ENCODE measurements at regions of chr7 and their contacts with region 1.

Region 1: GRCh38 chr7:26078437-26079336 is 73.3 kb upstream of the NFE2L3 start:
- DNase-seq: peak; percentile 80 to 87 (median 85)
- H3K4me3 ChIP-seq: peak overlapping the region in 3 of 7 experiments; percentile 37 to 58 (median 48)
- H3K27ac ChIP-seq: no peak overlapping the region
- H3K4me1 ChIP-seq: peaks cover 0 to 8% (median 0%) of the 10 kb centered on the region in 4 experiments
- H3K27me3 ChIP-seq: peaks cover 0 to 3% (median 0%) of the 10 kb centered on the region in 5 experiments

Region 2: DNA sequence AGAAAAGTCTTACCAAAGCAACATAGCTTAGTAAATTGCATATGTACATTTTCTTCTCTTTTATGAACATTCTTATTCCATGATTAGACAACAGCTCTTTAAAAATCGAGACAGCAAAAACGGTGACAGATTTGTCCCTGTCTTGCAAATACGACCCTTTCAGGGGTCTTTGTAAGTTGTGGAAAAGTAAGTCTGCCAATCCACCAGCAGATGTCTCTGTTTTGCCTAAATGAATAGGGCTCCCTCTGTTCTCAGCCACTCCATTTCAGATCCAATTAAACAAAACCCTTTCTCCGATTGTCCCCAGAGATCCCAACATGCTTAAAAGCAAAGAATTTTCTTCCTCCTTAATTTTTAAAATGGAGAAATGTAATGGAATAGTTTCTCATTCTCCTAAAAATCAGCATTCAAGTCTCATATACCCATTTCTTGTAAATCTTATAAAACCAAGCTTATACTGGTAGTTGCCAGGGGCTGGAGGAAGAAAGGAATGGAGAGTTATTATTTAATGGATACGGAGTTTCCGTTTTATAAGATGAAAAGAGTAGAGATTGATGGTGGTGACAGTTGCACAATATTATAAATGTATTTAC is 12.3 kb after region 1 on chr7:
- CTCF ChIA-PET with region 1: interaction called, 36 read pairs
- POLR2A ChIA-PET with region 1: interaction called, 3 read pairs
- DNase-seq: peak; percentile 75 to 78 (median 77)
- H3K4me3 ChIP-seq: peak overlapping the region in 5 of 7 experiments; percentile 11 to 69 (median 33)
- H3K27ac ChIP-seq: peak overlapping the region in 1 of 2 experiments; percentile 44
- H3K4me1 ChIP-seq: peaks cover 0 to 16% (median 6%) of the 10 kb centered on the region in 4 experiments
- H3K27me3 ChIP-seq: no peaks in the 10 kb centered on the region

Region 3: DNA sequence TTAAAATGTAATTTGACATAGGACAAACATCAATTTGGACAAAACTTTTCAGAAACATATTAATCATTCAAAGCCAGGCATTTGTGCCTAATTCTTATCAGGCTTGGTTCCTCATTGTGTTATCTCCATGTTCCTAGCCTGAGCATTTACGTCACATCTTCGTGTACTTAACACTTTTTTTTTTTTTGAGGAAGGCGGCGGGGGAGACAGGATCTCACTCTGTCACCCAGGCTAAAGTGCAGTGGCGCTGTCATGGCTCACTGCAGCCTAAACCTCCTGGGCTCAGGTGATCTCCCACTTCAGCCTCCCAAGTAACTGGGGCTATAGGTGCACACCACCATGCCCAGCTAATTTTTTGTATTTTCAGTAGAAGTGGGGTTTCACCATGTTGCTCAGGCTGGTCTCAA is 102.1 kb after region 1 on chr7:
- CTCF ChIA-PET with region 1: interaction called, 11 read pairs
- POLR2A ChIA-PET with region 1: no interaction called
- DNase-seq: peak; percentile 65 to 76 (median 70)
- H3K4me3 ChIP-seq: no peak overlapping the region
- H3K27ac ChIP-seq: peak overlapping the region in 1 of 2 experiments; percentile 65
- H3K4me1 ChIP-seq: peaks cover 0 to 1% (median 0%) of the 10 kb centered on the region in 4 experiments
- H3K27me3 ChIP-seq: no peaks in the 10 kb centered on the region

Region 4: DNA sequence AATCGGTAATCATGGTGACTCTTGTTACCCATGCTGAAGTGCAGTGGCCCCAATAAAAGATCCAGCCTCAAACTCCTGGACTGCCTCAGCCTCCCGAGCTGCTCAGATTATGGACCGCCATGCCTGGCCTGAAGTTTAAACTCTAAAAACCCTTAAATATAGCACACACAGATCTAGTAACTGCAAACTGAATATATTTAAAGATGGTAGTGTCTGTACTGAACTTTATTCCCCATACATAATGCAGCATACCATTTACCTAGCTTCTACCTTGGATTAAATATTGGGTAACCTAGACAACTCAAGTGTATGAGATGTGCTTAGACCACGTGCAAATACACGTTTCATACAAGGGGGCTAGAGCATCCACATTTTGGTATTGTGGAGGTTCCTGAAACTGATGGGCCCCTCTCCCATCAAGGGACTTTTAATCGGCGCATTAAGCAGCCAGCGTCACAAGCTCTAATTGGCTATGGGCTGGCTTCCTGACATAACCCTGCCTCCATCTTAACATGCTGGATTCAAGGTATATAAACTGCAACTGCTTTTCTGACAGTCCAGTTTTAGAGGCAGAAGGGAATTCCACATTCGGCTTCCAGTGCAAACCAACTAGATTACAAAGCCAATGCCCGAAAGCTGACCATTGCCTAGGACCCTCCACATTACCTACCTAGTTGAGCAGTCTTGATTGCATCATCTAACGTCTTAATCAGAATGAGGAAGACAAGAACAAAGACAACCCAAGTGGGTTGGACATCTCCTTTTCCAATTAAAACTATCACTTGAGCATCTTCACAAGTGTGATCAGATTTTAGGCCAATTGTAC is 108.9 kb after region 1 on chr7:
- CTCF ChIA-PET with region 1: interaction called, 150 read pairs
- POLR2A ChIA-PET with region 1: no interaction called
- DNase-seq: peak in 2 of 3 donors; percentile 53 to 60
- H3K4me3 ChIP-seq: no peak overlapping the region
- H3K27ac ChIP-seq: peak overlapping the region in 1 of 2 experiments; percentile 14
- H3K4me1 ChIP-seq: peaks cover 2 to 8% (median 2%) of the 10 kb centered on the region in 4 experiments
- H3K27me3 ChIP-seq: no peaks in the 10 kb centered on the region

Region 5: GRCh38 chr7:26193432-26194207 is 114.9 kb after region 1 on chr7:
- CTCF ChIA-PET with region 1: interaction called, 150 read pairs
- POLR2A ChIA-PET with region 1: no interaction called
- DNase-seq: peak in 2 of 3 donors; percentile 49 to 54
- H3K4me3 ChIP-seq: no peak overlapping the region
- H3K27ac ChIP-seq: no peak overlapping the region
- H3K4me1 ChIP-seq: peaks cover 36 to 58% (median 45%) of the 10 kb centered on the region in 4 experiments
- H3K27me3 ChIP-seq: no peaks in the 10 kb centered on the region

Region 6: DNA sequence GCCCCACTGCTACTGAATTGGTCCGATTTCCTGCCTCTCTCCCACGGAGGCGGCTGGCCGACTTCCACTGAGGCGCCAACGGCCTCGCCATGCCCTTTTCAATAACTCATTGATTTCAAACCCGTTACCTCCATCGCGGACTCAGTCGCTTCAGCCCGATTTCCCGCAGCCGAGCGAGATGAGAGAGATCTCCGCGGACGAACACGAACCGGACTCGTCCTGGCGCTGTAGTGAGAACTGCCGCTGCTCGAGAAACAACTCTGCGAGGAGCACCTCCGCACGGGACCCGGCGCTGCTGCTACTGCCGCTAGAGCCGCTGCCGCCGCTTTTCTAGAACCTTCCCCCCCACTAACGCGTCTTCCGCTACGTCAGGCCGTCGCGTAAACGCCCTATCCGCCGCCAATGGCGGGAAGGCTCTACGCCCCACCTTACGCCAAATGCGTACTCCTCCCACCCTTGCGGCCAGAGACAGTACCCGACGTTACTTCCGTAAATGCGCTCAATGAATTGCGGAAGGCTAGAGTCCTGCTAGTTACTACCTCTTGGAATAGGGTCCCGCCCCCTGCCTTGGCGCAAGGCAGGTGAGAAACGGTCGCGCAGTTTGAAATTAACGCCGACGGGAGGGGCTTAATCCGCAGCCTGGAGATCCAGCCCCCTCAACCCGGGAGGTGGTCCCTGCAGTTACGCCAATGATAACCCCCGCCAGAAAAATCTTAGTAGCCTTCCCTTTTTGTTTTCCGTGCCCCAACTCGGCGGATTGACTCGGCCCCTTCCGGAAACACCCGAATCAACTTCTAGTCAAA is 122.0 kb after region 1 on chr7 and contains the start of gene HNRNPA2B1:
- CTCF ChIA-PET with region 1: interaction called, 150 read pairs
- POLR2A ChIA-PET with region 1: no interaction called
- DNase-seq: peak; percentile 99 to 100 (median 100)
- H3K4me3 ChIP-seq: peak within 1 kb of the TSS; percentile 95 to 100 (median 99)
- H3K27ac ChIP-seq: peak within 1 kb of the TSS; percentile 98 to 99
- H3K4me1 ChIP-seq: peaks cover 36 to 55% (median 50%) of the 10 kb centered on the region in 4 experiments
- H3K27me3 ChIP-seq: no peaks in the 10 kb centered on the region

Measured in common myeloid progenitor, CD34-positive (primary cell).